Posterior vena cava (tissue), 2 donors: ENCODE measurements at regions of chr3 and their contacts with region 1.

Region 1: DNA sequence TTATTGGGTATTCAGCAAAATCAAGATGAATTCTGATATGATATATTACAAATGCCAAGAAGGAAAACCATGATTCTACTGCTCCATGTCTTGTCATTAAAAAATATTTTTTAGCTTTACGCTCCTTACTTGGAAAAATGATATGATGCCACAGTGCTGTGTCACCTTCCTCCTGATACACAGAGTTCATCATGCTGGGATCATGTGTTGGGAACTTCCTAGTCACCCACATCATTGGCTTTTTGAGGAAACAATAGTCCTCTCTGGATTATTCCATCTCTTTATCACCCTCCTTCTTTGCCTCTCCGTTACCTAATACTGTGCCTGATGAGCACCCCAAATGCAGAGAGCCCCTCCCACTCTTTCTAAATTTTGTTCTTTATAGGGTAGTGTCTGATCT is 94.3 kb upstream of the PFN2 start:
- DNase-seq: no peak

Region 2: GRCh38 chr3:148528024-148528423 is 1536.9 kb before region 1 on chr3:
- intact Hi-C with region 1: no loop called
- DNase-seq: no peak

Region 3: GRCh38 chr3:150114873-150115540 is 50.0 kb after region 1 on chr3:
- intact Hi-C with region 1: loop called in 1 of 2 experiments (anchors 1 kb)
- DNase-seq: no peak

Region 4: GRCh38 chr3:150248116-150248887 is 183.3 kb after region 1 on chr3:
- intact Hi-C with region 1: no loop called
- DNase-seq: no peak